B cell (primary cell): ENCODE measurements at regions of chr5 and their contacts with region 1.

Region 1: GRCh38 chr5:178711572-178711971 is 18.9 kb downstream of the ZNF354A start:
- DNase-seq: no peak
- ATAC-seq: no peak
- H3K4me3 ChIP-seq: no peak overlapping the region
- H3K4me3 Mint-ChIP-seq: no peak overlapping the region
- H3K27ac ChIP-seq: no peak overlapping the region
- H3K27ac Mint-ChIP-seq: no peak overlapping the region
- H3K4me1 ChIP-seq: no peaks in the 10 kb centered on the region
- H3K4me1 Mint-ChIP-seq: no peaks in the 10 kb centered on the region
- H3K27me3 ChIP-seq: no peaks in the 10 kb centered on the region
- H3K27me3 Mint-ChIP-seq: no peaks in the 10 kb centered on the region
- CTCF ChIP-seq: no peak

Region 2: GRCh38 chr5:178461004-178461730 is 250.4 kb before region 1 on chr5:
- CTCF ChIA-PET with region 1: no interaction called
- POLR2A ChIA-PET with region 1: no interaction called
- intact Hi-C with region 1: no loop called
- DNase-seq: peak; percentile 36
- ATAC-seq: no peak
- H3K4me3 ChIP-seq: no peak overlapping the region
- H3K4me3 Mint-ChIP-seq: no peak overlapping the region
- H3K27ac ChIP-seq: no peak overlapping the region
- H3K27ac Mint-ChIP-seq: no peak overlapping the region
- H3K4me1 ChIP-seq: no peaks in the 10 kb centered on the region
- H3K4me1 Mint-ChIP-seq: no peaks in the 10 kb centered on the region
- H3K27me3 ChIP-seq: no peaks in the 10 kb centered on the region
- H3K27me3 Mint-ChIP-seq: peaks cover 6% of the 10 kb centered on the region
- CTCF ChIP-seq: peak; percentile 39

Region 3: DNA sequence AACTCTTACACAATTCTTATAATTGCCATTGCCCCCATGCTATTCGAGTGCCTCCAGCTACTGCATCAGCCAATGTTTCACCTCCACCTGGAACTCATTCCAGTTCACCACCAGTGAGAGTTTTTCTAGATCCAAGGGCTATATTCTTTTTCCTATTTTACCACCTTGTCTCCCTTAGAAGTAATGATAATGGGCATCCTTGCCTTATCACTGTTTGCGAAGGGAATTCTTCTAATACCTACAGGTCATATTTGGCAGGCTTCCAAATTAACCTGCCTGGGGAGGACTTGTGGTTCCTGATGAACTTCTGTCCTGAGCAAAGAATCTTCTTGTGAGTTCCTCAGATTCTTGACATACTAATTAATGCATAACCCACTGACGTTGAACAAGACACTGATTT is 76.4 kb before region 1 on chr5:
- CTCF ChIA-PET with region 1: no interaction called
- POLR2A ChIA-PET with region 1: no interaction called
- intact Hi-C with region 1: loop called (anchors 5 kb)
- DNase-seq: no peak
- ATAC-seq: no peak
- H3K4me3 ChIP-seq: no peak overlapping the region
- H3K4me3 Mint-ChIP-seq: no peak overlapping the region
- H3K27ac ChIP-seq: no peak overlapping the region
- H3K27ac Mint-ChIP-seq: no peak overlapping the region
- H3K4me1 ChIP-seq: peaks cover 22 to 32% of the 10 kb centered on the region in 2 donors
- H3K4me1 Mint-ChIP-seq: peaks cover 30% of the 10 kb centered on the region
- H3K27me3 ChIP-seq: no peaks in the 10 kb centered on the region
- H3K27me3 Mint-ChIP-seq: no peaks in the 10 kb centered on the region
- CTCF ChIP-seq: no peak